ENCODE measurements at regions of chr1 and their contacts with region 1.

Region 1: DNA sequence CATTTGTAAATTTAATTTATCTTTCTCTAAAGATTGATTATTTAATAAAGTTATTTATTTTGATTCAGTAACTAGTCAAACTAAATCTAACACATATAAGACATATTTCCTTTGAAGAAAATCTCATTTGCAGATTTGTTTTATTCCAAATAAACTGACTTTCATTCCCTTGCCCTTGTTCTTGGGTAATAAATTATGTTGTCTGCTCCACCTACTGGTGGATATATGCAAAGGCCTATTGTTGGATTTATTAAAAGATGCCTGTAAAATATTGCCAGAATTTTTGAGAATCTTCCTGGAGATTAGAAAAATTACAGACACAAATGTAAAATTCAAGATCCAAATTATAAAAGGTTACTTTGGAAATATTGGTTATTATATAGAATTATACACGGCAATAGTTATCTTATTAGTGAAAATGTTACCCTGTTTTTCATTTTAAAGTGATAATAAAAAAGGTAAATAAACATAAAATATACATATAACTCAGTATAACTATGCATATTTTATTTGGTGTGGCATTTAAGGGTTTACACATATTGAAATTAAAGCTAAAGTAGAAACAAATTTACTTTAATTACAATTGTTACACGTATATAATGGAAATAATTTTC is 116.1 kb downstream of the SPATA17 start:
- DNase-seq: no peak
- H3K4me3 Mint-ChIP-seq: no peak overlapping the region
- H3K27ac Mint-ChIP-seq: no peak overlapping the region
- H3K4me1 Mint-ChIP-seq: no peaks in the 10 kb centered on the region
- H3K27me3 Mint-ChIP-seq: no peaks in the 10 kb centered on the region

Region 2: DNA sequence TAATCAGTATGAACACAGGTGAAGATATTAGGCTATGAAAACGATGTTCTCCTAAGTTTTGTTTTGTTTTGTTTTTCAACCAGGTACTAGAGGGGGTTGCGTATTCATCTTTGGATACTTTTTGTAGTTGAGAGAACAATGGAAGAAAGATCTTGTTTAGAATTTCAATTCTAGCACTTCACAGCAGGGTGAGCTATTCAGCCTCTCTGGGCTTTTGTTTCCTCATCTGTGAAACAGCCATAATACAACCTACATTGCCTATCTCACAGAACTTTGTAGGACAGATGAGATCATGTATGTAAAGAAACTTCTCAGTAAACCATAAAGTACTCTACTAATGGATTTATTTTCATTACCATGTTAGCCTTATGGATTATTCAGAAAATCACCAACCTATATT is 315.9 kb before region 1 on chr1:
- intact Hi-C with region 1: loop called (anchors 1 kb)
- DNase-seq: no peak
- H3K4me3 Mint-ChIP-seq: no peak overlapping the region
- H3K27ac Mint-ChIP-seq: no peak overlapping the region
- H3K4me1 Mint-ChIP-seq: no peaks in the 10 kb centered on the region
- H3K27me3 Mint-ChIP-seq: no peaks in the 10 kb centered on the region

Region 3: GRCh38 chr1:217813031-217813430 is 65.8 kb after region 1 on chr1:
- intact Hi-C with region 1: no loop called
- DNase-seq: no peak
- H3K4me3 Mint-ChIP-seq: no peak overlapping the region
- H3K27ac Mint-ChIP-seq: no peak overlapping the region
- H3K4me1 Mint-ChIP-seq: no peaks in the 10 kb centered on the region
- H3K27me3 Mint-ChIP-seq: no peaks in the 10 kb centered on the region